ENCODE measurements at regions of chr6 and their contacts with region 1.

Region 1: DNA sequence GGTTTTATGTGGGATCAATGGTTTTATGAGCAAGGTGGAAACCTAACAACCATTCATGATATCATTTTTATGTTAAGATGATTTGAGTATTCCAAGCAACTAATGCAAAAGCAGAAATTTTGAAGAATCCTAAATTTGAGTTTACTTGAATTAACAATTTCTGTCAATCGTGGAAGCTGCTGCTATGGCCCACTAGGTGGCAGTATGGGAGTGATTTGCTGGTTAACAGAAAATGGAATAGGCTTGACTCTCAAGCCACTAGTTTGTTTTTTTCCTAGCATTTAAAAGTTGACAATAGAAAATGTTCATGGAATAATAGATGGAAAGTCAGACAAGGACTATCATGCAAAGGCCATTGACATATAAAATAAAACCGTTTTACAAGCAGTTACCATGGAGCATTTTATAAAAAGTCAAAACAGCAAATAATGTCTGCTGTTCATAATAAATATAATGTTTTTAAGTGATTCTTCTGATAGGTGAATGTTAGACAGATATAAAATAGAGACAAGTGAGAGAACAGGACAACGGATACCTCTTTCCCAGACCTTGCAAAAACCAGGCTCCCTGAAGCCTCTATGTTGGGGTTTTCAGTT is 43.0 kb upstream of the TMEM200A start:
- DNase-seq: peak; percentile 8
- ATAC-seq: peak; percentile 60; the same call in 1 of the 2 replicates
- H3K4me3 ChIP-seq: no peak overlapping the region
- H3K27ac ChIP-seq: no peak overlapping the region
- H3K4me1 ChIP-seq: no peaks in the 10 kb centered on the region
- H3K27me3 ChIP-seq: no peaks in the 10 kb centered on the region
- CTCF ChIP-seq: peak; percentile 86

Region 2: DNA sequence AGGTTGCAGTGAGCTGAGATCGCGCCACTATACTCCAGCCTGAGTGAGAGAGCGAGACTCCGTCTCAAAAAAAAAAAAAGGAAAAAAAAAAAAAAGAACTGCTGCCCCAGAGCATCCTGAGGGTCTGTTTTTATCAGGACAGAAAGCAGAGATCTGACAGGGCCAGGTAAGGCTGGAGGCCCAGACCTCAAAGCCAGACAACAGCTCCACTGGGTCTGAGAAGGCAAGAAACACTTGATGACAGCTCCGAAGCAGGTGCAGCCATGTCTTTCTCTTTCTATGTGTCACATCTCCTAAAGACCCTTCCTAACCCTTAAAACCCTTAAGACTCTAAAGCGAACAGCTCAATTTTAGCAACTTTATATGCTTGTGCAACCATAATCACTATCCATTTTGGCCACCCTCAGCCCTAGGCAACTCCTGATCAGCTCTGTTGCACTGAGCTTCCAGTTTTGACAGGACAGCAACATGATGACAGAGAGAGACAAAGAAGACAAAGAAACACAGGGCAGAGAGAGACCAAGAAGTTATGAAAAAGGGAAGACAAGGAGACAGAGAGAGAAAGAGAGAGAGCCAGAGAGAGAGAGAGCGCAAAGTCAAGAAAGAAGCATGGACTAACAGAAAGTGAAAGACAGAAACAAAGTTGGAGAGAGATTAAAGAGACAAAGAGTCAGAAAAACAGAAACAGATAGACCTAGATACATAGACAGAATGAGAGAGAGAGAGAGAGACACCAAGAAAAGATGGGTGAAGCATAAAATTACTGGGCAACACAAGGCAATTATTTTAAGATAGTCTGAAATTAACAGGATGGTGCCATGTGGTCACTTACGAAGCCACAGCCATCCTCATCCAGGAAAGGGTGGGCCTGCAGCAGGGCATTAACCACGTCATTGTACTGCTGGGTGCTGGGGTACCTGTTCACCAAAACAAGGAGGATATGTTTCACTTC is 139.2 kb before region 1 on chr6:
- CTCF ChIA-PET with region 1: no interaction called
- POLR2A ChIA-PET with region 1: no interaction called
- in situ Hi-C with region 1: no loop called
- intact Hi-C with region 1: no loop called
- DNase-seq: no peak
- ATAC-seq: no peak
- H3K4me3 ChIP-seq: 0 out of 4 replicates have a peak overlapping the region, but pooled peaks of 1 of the 2 experiments have one; percentile 1
- H3K27ac ChIP-seq: no peak overlapping the region
- H3K4me1 ChIP-seq: no peaks in the 10 kb centered on the region
- H3K27me3 ChIP-seq: no peaks in the 10 kb centered on the region
- CTCF ChIP-seq: no peak

Region 3: DNA sequence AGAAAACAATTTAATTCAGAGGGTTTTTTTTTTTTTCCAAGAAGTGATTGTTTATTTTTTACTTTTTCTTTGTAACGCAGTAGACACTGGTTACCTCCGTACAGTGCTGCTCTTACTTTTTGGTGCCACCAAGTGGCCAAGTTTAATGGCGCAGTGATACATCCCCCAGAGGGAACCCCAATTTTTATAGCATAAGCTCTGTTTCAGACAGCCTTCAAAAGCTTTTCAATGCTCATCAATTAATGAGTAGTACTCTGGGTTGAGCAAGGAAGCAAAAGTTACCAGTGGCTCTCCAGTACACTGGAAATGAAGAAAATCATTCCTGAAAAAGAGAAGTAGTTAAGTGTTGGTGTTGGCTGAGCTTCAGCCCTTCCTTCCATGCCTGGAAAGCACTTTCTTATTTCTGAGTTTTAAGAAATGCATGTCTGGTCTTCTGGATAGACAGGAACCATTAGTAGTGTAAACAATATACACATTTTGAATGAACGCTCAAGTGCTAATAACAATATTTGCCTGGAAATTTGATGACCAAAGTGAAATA is 375.3 kb after region 1 on chr6:
- CTCF ChIA-PET with region 1: no interaction called
- POLR2A ChIA-PET with region 1: no interaction called
- in situ Hi-C with region 1: no loop called
- intact Hi-C with region 1: loop called (anchors 1 kb)
- DNase-seq: peak; percentile 10
- ATAC-seq: peak; percentile 90
- H3K4me3 ChIP-seq: no peak overlapping the region
- H3K27ac ChIP-seq: no peak overlapping the region
- H3K4me1 ChIP-seq: no peaks in the 10 kb centered on the region; the same call in 1 of the 2 replicates
- H3K27me3 ChIP-seq: no peaks in the 10 kb centered on the region; the same call in 1 of the 2 replicates
- CTCF ChIP-seq: peak; percentile 80

Region 4: GRCh38 chr6:130760006-130760405 is 437.2 kb after region 1 on chr6:
- CTCF ChIA-PET with region 1: no interaction called
- POLR2A ChIA-PET with region 1: no interaction called
- in situ Hi-C with region 1: no loop called
- intact Hi-C with region 1: loop called (anchors 2 kb)
- DNase-seq: no peak
- ATAC-seq: peak; percentile 87
- H3K4me3 ChIP-seq: no peak overlapping the region
- H3K27ac ChIP-seq: no peak overlapping the region
- H3K4me1 ChIP-seq: no peaks in the 10 kb centered on the region
- H3K27me3 ChIP-seq: no peaks in the 10 kb centered on the region
- CTCF ChIP-seq: peak; percentile 76

Region 5: DNA sequence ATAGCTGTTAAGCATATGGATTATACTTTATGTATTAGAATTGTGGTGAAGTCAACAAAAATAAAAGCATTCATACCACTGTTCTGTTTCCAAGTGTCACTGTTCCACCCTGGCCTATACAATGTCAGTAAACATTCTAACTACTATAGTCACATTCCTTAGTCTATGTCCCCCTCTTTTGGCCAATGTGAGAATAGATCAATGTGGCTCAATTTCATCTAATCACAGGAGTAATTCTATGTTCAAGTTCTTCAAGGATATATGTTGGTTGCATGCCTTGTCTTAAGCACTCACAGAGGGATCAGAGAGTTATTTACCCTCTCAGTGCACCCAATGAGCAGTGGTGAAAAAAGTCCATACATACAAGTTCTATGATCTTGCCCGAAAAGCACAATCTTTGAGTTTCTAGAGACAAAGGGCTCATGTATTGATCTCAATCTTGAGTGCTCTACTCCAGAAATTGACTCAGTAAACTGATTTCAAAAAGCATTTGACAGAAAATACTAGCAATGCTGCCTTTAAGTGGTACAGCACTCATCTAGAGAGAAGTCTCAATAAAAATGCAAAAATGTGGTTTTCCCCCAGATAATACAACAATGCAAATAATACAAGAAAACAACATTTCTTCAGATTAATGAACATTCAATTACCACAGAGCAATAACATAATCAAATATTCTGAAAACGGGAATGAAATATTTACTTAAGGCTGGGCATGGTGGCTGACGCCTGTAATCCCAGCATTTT is 521.0 kb after region 1 on chr6:
- CTCF ChIA-PET with region 1: no interaction called
- POLR2A ChIA-PET with region 1: no interaction called
- in situ Hi-C with region 1: no loop called
- intact Hi-C with region 1: loop called (anchors 5 kb)
- DNase-seq: peak; percentile 8
- ATAC-seq: peak; percentile 77
- H3K4me3 ChIP-seq: no peak overlapping the region
- H3K27ac ChIP-seq: no peak overlapping the region
- H3K4me1 ChIP-seq: no peaks in the 10 kb centered on the region
- H3K27me3 ChIP-seq: no peaks in the 10 kb centered on the region
- CTCF ChIP-seq: peak; percentile 39; the same call in 1 of the 2 replicates

Region 6: DNA sequence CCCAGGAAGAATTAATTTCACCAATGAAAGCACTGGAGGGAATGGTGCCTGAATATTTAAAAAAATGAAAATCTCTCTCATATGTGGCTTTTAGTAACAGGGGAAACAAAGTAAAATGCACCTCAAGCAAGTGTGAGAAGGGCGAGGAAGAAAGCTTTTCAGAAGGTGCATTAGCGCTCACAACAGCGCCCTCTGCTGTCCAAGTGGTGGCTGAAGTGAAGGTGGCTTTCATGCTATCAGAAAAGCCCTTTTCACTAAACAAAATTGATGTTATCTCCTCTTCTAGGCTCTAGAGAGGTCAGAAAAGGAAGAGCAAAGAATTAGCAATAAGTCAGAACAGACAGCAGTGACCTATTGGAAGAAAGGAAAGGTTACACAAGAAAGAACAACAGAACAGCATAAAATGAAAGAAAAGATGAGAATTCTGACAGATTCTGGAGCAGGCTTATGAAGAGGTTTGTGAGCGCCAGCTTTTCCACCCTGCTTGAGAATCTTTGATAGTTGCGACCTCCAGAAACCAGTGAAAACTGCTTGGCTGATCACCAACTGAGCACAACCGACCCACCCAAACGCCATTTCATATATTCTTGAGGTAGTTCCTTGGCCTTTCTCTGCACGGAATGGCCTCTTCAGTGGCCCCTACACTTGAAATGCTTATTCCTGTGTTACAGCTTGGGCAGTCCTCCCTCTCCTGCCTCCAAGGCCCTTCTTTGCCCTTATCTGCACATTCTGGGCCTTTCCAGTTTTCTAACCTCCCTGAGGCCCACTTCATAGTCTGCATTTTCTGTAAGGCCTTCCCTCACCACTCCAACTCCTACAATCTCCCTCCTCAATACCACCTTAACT is 549.7 kb after region 1 on chr6:
- CTCF ChIA-PET with region 1: no interaction called
- POLR2A ChIA-PET with region 1: no interaction called
- in situ Hi-C with region 1: no loop called
- intact Hi-C with region 1: loop called (anchors 5 kb)
- DNase-seq: peak; percentile 53
- ATAC-seq: peak; percentile 78
- H3K4me3 ChIP-seq: no peak overlapping the region
- H3K27ac ChIP-seq: no peak overlapping the region
- H3K4me1 ChIP-seq: no peaks in the 10 kb centered on the region
- H3K27me3 ChIP-seq: no peaks in the 10 kb centered on the region
- CTCF ChIP-seq: peak; percentile 96